ENCODE measurements at regions of chr12 and their contacts with region 1.

Region 1: GRCh38 chr12:111274777-111275176 is 94.1 kb downstream of the PHETA1 start:
- DNase-seq: no peak
- H3K4me3 ChIP-seq: no peak overlapping the region
- H3K4me3 Mint-ChIP-seq: no peak overlapping the region
- H3K27ac ChIP-seq: no peak overlapping the region
- H3K27ac Mint-ChIP-seq: no peak overlapping the region
- H3K4me1 ChIP-seq: no peaks in the 10 kb centered on the region
- H3K4me1 Mint-ChIP-seq: peaks cover 11% of the 10 kb centered on the region
- H3K27me3 ChIP-seq: no peaks in the 10 kb centered on the region
- H3K27me3 Mint-ChIP-seq: peaks cover 5 to 9% (median 5%) of the 10 kb centered on the region in 3 donors
- CTCF ChIP-seq: no peak

Region 2: DNA sequence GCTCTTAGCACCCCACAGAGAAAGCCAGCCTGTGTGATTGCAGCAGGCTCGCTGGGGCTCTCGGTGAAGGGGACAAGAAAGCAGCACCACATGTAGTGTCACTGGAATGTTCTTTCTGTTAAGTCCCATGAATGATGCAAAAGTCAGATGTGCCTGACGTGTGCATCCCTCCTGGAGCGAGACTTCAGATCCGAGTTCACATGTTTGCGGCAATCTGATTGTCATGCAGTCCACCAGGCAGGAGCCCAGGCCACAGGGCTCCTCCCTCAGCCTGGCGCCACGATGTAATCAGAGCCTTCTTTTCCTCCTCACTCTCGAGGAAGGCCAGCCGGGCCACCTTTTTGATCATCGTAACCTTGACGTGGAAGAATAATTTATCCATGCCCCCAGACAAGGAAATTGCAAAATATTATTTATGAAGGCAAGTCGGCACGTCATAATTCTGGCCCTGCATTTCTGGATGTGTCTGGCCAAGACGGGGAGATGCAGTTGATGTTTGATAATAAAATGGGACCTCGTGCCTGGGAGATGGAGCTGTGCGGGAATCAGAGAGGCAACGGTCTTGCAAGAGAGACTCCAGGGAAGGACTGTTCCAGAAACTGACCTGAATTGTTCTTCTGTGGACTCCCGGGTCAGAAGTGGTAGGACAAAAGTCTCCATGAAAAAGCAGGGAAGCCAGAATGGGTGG is 120.5 kb before region 1 on chr12:
- intact Hi-C with region 1: loop called in 1 of 2 experiments (anchors 10 kb)
- DNase-seq: no peak
- H3K4me3 ChIP-seq: no peak overlapping the region
- H3K4me3 Mint-ChIP-seq: no peak overlapping the region
- H3K27ac ChIP-seq: no peak overlapping the region
- H3K27ac Mint-ChIP-seq: no peak overlapping the region
- H3K4me1 ChIP-seq: peaks cover 11 to 17% of the 10 kb centered on the region in 2 donors
- H3K4me1 Mint-ChIP-seq: peaks cover 29% of the 10 kb centered on the region
- H3K27me3 ChIP-seq: no peaks in the 10 kb centered on the region
- H3K27me3 Mint-ChIP-seq: peaks cover 0 to 5% (median 2%) of the 10 kb centered on the region in 3 donors
- CTCF ChIP-seq: no peak

Region 3: GRCh38 chr12:111715279-111715678 is 440.5 kb after region 1 on chr12:
- intact Hi-C with region 1: no loop called
- DNase-seq: no peak
- H3K4me3 ChIP-seq: no peak overlapping the region
- H3K4me3 Mint-ChIP-seq: no peak overlapping the region
- H3K27ac ChIP-seq: no peak overlapping the region
- H3K27ac Mint-ChIP-seq: peak overlapping the region in 2 of 7 donors; percentile 33 to 68
- H3K4me1 ChIP-seq: no peaks in the 10 kb centered on the region
- H3K4me1 Mint-ChIP-seq: no peaks in the 10 kb centered on the region
- H3K27me3 ChIP-seq: no peaks in the 10 kb centered on the region
- H3K27me3 Mint-ChIP-seq: no peaks in the 10 kb centered on the region
- CTCF ChIP-seq: no peak

Measured in CD14-positive monocyte (primary cell).